Endothelial cell of umbilical vein (primary cell): ENCODE measurements at regions of chr7 and their contacts with region 1.

Region 1: DNA sequence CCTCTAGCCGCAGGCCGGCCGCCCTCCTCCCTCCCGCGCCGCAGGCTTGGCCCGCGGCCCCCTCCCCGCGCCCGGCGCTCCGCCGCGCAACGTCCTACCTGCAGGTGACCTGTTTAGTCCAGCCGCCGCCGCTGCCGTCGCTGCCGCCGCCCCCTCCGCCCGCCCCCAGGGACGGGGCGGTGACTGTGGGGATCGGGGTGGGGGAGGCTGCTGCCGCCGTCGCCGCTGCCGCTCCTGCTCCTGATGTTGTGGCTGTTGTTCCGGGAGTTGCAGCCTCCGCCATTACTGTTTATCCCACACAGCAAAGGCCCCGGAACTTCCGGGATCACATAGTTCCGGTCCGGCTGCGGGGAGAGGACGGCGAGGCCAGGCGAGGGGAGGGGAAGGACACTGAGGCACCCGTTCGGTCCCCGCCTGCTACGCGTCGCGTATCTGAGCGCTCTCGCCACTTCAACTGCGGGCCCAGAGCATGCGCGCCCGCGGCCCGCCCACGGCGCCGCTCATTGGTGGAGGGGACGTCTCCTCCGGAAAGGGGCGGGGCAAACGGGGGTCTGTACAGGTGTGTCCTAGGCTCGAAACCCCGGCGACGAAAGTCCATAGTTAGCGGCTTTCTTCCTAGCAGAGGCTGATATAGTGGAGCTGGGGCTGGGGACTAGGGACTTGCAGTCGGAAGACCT is at the start of gene MKRN1:
- DNase-seq: peak; percentile 85
- H3K4me3 ChIP-seq: peak within 1 kb of the TSS; percentile 84 to 93 (median 89)
- H3K27ac ChIP-seq: peak within 1 kb of the TSS; percentile 39
- H3K4me1 ChIP-seq: peaks cover 13% of the 10 kb centered on the region
- H3K27me3 ChIP-seq: peaks cover 0 to 5% of the 10 kb centered on the region in 2 experiments
- CTCF ChIP-seq: no peak
- POLR2A ChIP-seq: peak; percentile 64
- total RNA-seq, gene MKRN1: 52.1 and 52.2 TPM in 2 replicates

Region 2: DNA sequence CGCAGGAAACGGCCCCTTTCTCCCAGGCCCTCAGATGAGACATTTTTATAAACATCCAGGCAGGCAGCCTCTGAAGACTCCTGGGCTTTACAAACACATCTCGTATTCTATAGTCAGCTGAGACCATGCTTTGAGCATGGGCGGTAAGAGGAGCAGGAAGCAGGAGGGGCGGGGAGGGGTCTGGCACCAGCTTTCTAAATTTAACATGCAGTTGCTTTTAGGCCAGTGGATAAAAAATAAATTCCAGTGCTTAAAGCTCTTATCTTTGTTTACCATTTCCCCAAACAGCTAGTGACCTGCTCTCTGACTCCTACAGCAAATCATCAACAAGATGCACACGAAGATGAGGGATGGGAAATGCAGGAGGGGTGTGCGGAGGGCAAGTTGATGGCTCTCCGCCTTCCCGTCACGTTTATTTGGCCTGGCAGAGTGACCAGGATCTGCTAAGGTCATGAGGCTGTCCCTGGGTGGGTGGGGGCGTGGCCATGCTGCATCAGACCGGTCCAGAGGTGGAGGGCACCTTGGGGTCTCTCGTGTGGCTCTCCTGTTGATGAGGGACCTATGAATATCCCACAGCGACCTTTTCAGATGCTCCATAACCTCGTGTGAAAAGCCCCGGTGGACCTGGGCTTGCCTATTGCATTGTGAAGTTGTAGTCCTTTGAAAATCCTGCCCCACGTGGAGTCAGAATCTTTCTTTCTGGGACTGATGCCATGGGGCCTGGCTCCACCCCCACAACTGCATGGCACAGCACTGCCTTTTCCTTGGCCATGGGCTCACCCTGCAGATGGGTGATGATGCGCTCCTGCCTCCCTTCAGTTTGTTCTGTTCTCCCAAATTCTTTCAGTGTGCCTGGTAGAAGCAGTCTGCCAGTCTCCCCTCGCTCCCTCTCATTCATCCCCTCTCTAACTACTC is 483.9 kb before region 1 on chr7:
- CTCF ChIA-PET with region 1: no interaction called
- POLR2A ChIA-PET with region 1: no interaction called
- dilution Hi-C with region 1: no loop called
- intact Hi-C with region 1: no loop called
- DNase-seq: no peak
- H3K4me3 ChIP-seq: no peak overlapping the region
- H3K27ac ChIP-seq: no peak overlapping the region
- H3K4me1 ChIP-seq: no peaks in the 10 kb centered on the region
- H3K27me3 ChIP-seq: no peaks in the 10 kb centered on the region
- CTCF ChIP-seq: no peak
- POLR2A ChIP-seq: no peak

Region 3: GRCh38 chr7:140349144-140349771 is 129.9 kb before region 1 on chr7:
- CTCF ChIA-PET with region 1: no interaction called
- POLR2A ChIA-PET with region 1: no interaction called
- dilution Hi-C with region 1: no loop called
- intact Hi-C with region 1: loop called (anchors 5 kb)
- DNase-seq: peak; percentile 80
- H3K4me3 ChIP-seq: peak overlapping the region in 1 of 3 experiments; percentile 37
- H3K27ac ChIP-seq: peak overlapping the region; percentile 89
- H3K4me1 ChIP-seq: peaks cover 18% of the 10 kb centered on the region
- H3K27me3 ChIP-seq: no peaks in the 10 kb centered on the region
- CTCF ChIP-seq: no peak
- POLR2A ChIP-seq: no peak

Region 4: DNA sequence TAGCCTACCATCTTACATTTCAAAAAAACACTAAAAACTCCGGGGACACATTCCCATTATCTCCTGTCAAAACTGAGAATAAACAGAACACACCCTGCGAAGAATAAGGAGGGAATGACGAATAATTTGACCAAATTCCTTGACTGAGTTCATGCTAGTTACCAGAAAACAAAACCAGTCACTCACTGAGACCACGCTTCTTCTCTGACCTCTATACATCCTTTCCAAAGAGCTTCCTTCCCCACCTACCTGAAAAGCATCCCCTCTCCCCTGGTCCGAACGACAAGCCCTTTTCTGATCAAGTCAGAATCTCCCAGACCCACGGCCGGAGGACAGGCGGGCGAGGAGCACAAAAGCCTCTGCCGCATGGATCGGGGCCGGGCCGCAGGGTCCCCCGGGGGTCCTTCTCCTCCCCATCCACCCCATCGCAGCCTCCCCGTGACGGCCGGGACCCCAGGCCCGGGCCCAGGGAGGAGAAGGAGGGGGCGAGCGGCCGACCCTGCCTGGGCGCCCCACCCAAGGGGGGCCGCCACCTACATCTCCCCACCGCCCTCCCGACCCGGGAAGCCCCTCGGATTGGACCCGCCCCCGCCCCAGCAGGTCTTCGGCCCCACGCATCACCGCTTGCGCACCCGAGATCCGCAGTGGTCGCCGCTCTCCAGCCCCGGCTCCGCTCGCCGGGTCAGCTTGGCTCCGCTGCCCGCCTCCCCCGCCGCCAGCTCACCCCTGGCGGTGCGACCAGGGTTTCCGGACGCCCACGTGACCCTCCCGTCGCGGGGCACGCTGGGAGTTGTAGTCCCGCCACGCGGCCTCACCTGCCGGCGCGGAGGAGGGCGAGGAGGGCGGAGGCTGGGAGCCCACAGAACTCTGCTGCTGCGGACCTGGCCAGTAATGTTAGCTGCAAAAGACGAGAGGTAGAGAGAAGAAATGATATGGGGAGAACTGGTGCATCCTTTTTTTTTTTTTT is 81.1 kb before region 1 on chr7 and contains the start of gene SLC37A3:
- CTCF ChIA-PET with region 1: no interaction called
- POLR2A ChIA-PET with region 1: no interaction called
- dilution Hi-C with region 1: no loop called
- intact Hi-C with region 1: loop called (anchors 2 kb)
- DNase-seq: peak; percentile 74
- H3K4me3 ChIP-seq: peak within 1 kb of the TSS; percentile 68 to 100 (median 86)
- H3K27ac ChIP-seq: peak within 1 kb of the TSS; percentile 60
- H3K4me1 ChIP-seq: peaks cover 18% of the 10 kb centered on the region
- H3K27me3 ChIP-seq: no peaks in the 10 kb centered on the region
- CTCF ChIP-seq: no peak
- POLR2A ChIP-seq: peak; percentile 82
- total RNA-seq, gene SLC37A3: 32.7 and 35.3 TPM in 2 replicates

Region 5: GRCh38 chr7:140417456-140418155 is 61.6 kb before region 1 on chr7:
- CTCF ChIA-PET with region 1: no interaction called
- POLR2A ChIA-PET with region 1: no interaction called
- dilution Hi-C with region 1: no loop called
- intact Hi-C with region 1: no loop called
- DNase-seq: no peak
- H3K4me3 ChIP-seq: no peak overlapping the region
- H3K27ac ChIP-seq: no peak overlapping the region
- H3K4me1 ChIP-seq: no peaks in the 10 kb centered on the region
- H3K27me3 ChIP-seq: peaks cover 0 to 2% of the 10 kb centered on the region in 2 experiments
- CTCF ChIP-seq: no peak
- POLR2A ChIP-seq: no peak

Region 6: DNA sequence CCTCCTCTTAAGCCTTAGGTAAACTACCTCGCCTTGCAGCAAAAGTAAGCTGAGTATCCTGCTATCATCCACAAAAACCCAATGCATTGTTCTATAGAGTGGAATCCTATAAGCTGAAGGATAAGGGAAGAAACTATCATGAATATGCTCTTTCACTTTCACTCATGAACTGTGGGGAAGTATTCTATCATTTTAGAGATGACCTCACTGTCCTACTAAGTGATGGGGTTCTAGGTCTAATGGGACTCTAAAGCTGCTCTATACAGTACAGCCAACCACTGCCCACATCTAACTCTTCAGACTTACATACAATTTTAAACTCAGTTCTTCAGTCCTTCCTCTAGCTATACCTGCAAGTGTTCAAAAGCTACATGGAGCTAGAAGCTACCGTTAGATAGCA is 16.1 kb before region 1 on chr7:
- CTCF ChIA-PET with region 1: no interaction called
- POLR2A ChIA-PET with region 1: no interaction called
- dilution Hi-C with region 1: no loop called
- intact Hi-C with region 1: loop called (anchors 2 kb)
- DNase-seq: no peak
- H3K4me3 ChIP-seq: no peak overlapping the region
- H3K27ac ChIP-seq: no peak overlapping the region
- H3K4me1 ChIP-seq: no peaks in the 10 kb centered on the region
- H3K27me3 ChIP-seq: no peaks in the 10 kb centered on the region
- CTCF ChIP-seq: no peak
- POLR2A ChIP-seq: no peak

Region 7: GRCh38 chr7:140494867-140495266 is 15.7 kb after region 1 on chr7:
- CTCF ChIA-PET with region 1: interaction called, 16 read pairs
- POLR2A ChIA-PET with region 1: no interaction called
- dilution Hi-C with region 1: no loop called
- intact Hi-C with region 1: loop called (anchors 1 kb)
- DNase-seq: no peak
- H3K4me3 ChIP-seq: no peak overlapping the region
- H3K27ac ChIP-seq: no peak overlapping the region
- H3K4me1 ChIP-seq: no peaks in the 10 kb centered on the region
- H3K27me3 ChIP-seq: no peaks in the 10 kb centered on the region
- CTCF ChIP-seq: no peak
- POLR2A ChIP-seq: no peak

Region 8: DNA sequence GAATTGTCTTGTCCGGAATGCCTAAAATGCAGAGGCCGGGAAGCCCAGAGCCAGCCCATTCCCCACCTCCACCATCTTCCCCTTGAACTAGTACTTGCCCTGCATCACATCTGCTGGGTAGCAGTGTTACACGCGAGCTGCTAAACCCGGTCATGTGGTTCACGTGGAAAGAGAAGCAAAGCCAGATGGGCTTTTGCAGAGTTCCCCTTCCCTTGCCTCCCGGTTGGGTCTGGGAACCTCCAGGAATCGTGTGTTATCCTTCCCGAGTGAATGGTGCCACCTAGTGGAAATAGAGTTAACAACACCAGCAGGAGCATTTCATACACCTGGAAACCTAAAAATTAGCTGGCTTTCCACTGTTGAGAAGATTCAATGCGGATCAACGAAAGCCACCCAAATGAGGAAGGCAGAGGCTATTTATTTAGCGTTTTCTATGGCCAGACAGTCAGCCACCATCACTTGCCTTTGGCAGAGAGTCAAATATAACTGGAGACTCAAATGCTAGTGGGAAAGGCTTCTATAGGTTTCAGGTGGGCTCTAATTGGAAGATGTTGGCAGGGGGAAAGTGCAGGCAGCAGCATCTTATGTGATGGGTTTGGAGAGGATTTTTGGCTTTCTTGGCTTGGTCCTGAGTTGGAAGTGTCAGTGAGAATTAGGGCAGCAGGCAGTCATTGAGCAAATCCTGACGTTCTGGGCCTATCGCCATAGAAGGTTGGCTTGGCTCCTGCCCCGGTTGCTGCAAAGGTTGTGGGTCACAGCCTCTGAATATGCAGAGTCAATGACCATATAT is 174.3 kb after region 1 on chr7:
- CTCF ChIA-PET with region 1: interaction called, 15 read pairs
- POLR2A ChIA-PET with region 1: no interaction called
- dilution Hi-C with region 1: no loop called
- intact Hi-C with region 1: loop called (anchors 1 kb)
- DNase-seq: peak; percentile 62
- H3K4me3 ChIP-seq: no peak overlapping the region
- H3K27ac ChIP-seq: no peak overlapping the region
- H3K4me1 ChIP-seq: peaks cover 8% of the 10 kb centered on the region
- H3K27me3 ChIP-seq: no peaks in the 10 kb centered on the region
- CTCF ChIP-seq: peak; percentile 65 to 74
- POLR2A ChIP-seq: no peak

Region 9: DNA sequence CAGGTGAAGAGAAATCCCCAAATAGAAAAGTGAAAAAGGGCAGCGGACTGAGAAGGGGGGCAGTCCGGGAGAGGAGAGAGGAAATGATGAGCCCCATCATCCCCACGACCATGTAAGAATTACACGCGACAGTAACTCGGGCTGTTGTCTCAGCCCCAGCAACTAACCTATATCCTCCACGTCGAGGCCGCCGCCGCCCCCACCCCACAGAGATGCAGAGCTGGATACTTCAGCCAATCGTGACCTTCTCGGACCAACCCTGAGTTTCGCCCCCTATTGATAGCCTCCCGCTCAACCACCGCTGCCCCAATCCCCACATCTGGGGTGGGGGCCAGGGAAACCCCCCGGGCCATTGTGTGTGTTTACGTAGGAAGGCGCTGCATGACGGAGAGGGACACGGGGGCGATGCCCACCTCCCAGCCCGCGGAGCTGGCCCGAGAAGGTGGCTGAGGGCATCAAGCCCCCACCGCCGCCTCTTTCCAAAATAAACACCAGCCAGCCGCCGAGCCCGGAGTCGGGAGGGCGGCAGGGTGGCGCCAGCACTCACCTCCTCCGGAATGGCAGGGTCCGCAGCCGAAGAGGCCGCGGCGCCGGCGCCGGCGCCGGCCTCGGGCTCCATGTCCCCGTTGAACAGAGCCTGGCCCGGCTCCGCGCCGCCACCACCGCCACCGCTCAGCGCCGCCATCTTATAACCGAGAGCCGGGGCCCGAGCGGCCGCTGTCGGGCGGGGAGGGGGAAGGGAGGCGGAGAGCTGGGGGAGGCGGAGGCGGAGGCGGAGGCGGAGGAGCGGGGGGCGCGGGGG is 445.0 kb after region 1 on chr7:
- CTCF ChIA-PET with region 1: no interaction called
- POLR2A ChIA-PET with region 1: no interaction called
- dilution Hi-C with region 1: no loop called
- intact Hi-C with region 1: loop called (anchors 2 kb)
- DNase-seq: peak; percentile 85
- H3K4me3 ChIP-seq: peak overlapping the region; percentile 64 to 89 (median 88)
- H3K27ac ChIP-seq: peak overlapping the region; percentile 93
- H3K4me1 ChIP-seq: peaks cover 12% of the 10 kb centered on the region
- H3K27me3 ChIP-seq: peaks cover 3 to 4% of the 10 kb centered on the region in 2 experiments
- CTCF ChIP-seq: peak; percentile 37 to 56
- POLR2A ChIP-seq: peak; percentile 62